MCF 10A (cell line): ENCODE measurements at regions of chr9 and their contacts with region 1.

Region 1: DNA sequence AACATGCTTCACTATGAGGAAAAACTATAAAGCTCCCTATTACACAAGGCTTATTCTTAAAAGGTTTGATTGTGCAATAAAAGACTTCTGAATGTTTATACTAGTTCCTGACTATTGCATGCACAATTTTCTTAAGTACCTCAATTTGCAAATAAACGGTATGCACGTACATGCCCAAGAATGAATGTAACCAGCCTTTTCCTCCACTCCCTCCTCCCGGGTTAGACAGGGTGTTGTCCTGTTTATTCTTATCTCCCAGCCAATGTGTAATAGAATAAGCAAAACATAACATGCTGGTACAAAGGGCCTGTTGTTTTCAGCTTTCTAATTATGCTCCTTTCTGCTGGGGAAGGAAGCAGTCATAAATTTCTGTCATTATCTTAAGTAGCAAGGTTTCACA is 79.1 kb downstream of the AOPEP start:
- DNase-seq: peak; percentile 93
- H3K4me3 Mint-ChIP-seq: peak overlapping the region; percentile 51
- H3K27ac Mint-ChIP-seq: peak overlapping the region; percentile 100
- H3K4me1 Mint-ChIP-seq: peaks cover 50% of the 10 kb centered on the region
- H3K27me3 Mint-ChIP-seq: no peaks in the 10 kb centered on the region
- CTCF ChIP-seq: no peak

Region 2: GRCh38 chr9:94639061-94639998 is 166.3 kb before region 1 on chr9 and contains the start of gene FBP1:
- CTCF ChIA-PET with region 1: no interaction called
- POLR2A ChIA-PET with region 1: no interaction called
- intact Hi-C with region 1: no loop called
- DNase-seq: no peak
- H3K4me3 Mint-ChIP-seq: peak within 1 kb of the TSS; percentile 43
- H3K27ac Mint-ChIP-seq: no peak within 1 kb of the TSS
- H3K4me1 Mint-ChIP-seq: peaks cover 1% of the 10 kb centered on the region
- H3K27me3 Mint-ChIP-seq: peaks cover 12% of the 10 kb centered on the region
- CTCF ChIP-seq: no peak
- total RNA-seq, gene FBP1: not detected in 2 replicates

Region 3: GRCh38 chr9:94717761-94718160 is 87.8 kb before region 1 on chr9:
- CTCF ChIA-PET with region 1: no interaction called
- POLR2A ChIA-PET with region 1: no interaction called
- intact Hi-C with region 1: no loop called
- DNase-seq: no peak
- H3K4me3 Mint-ChIP-seq: no peak overlapping the region
- H3K27ac Mint-ChIP-seq: no peak overlapping the region
- H3K4me1 Mint-ChIP-seq: peaks cover 5% of the 10 kb centered on the region
- H3K27me3 Mint-ChIP-seq: no peaks in the 10 kb centered on the region
- CTCF ChIP-seq: no peak

Region 4: GRCh38 chr9:94772639-94773303 is 32.8 kb before region 1 on chr9:
- CTCF ChIA-PET with region 1: no interaction called
- POLR2A ChIA-PET with region 1: no interaction called
- intact Hi-C with region 1: no loop called
- DNase-seq: no peak
- H3K4me3 Mint-ChIP-seq: no peak overlapping the region
- H3K27ac Mint-ChIP-seq: no peak overlapping the region
- H3K4me1 Mint-ChIP-seq: no peaks in the 10 kb centered on the region
- H3K27me3 Mint-ChIP-seq: no peaks in the 10 kb centered on the region
- CTCF ChIP-seq: no peak

Region 5: DNA sequence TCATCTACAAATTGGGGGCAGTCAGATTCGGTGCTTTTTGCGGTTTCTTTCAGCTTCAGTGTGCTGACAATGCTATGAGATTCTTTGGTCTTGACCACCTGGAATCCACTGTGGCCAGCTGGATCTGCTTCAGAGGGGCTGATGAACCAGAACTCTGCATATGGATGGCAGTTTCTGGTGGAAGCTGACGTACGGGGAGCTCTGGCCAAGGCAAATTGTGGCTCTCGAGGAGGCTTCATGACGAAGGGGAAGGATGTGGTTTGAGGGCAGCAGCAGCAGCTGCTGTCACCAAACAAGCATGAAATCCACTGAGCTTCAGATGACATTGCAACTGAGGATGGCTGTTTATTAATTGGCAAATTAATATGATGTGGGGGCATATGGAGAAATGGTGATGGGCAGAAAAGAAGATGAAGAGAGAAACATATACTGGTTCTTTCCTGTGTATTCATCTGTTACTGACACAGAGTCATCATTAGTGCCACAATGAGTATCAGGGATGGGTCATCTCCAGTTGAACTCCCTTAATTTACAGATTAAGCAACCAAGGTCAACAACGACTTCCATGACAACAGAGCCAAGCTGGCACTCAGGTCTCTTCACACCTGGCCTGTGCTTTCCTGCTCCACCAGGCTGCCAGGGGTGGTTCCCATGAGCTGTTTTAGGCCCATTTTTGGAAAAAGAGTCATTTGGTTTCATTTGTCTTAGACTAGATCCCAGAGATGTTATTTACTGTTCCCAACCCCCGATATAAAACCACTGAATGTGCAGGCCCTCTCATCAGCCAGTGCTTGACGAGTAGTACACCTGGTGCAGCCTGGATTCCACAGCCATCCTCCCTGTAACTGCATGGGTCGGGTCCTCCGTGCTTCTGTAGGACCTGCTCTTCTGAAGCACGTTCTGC is 55.6 kb after region 1 on chr9:
- CTCF ChIA-PET with region 1: no interaction called
- POLR2A ChIA-PET with region 1: interaction called, 50 read pairs
- intact Hi-C with region 1: loop called (anchors 10 kb)
- DNase-seq: no peak
- H3K4me3 Mint-ChIP-seq: no peak overlapping the region
- H3K27ac Mint-ChIP-seq: peak overlapping the region; percentile 76
- H3K4me1 Mint-ChIP-seq: peaks cover 22% of the 10 kb centered on the region
- H3K27me3 Mint-ChIP-seq: no peaks in the 10 kb centered on the region
- CTCF ChIP-seq: no peak

Region 6: GRCh38 chr9:94881023-94881422 is 75.4 kb after region 1 on chr9:
- CTCF ChIA-PET with region 1: no interaction called
- POLR2A ChIA-PET with region 1: interaction called, 12 read pairs
- intact Hi-C with region 1: no loop called
- DNase-seq: no peak
- H3K4me3 Mint-ChIP-seq: no peak overlapping the region
- H3K27ac Mint-ChIP-seq: no peak overlapping the region
- H3K4me1 Mint-ChIP-seq: peaks cover 15% of the 10 kb centered on the region
- H3K27me3 Mint-ChIP-seq: no peaks in the 10 kb centered on the region
- CTCF ChIP-seq: no peak

Region 7: GRCh38 chr9:94912700-94913249 is 107.2 kb after region 1 on chr9:
- CTCF ChIA-PET with region 1: interaction called, 11 read pairs
- POLR2A ChIA-PET with region 1: interaction called, 24 read pairs
- intact Hi-C with region 1: no loop called
- DNase-seq: peak; percentile 82
- H3K4me3 Mint-ChIP-seq: peak overlapping the region; percentile 21
- H3K27ac Mint-ChIP-seq: peak overlapping the region; percentile 57
- H3K4me1 Mint-ChIP-seq: peaks cover 35% of the 10 kb centered on the region
- H3K27me3 Mint-ChIP-seq: no peaks in the 10 kb centered on the region
- CTCF ChIP-seq: no peak

Region 8: GRCh38 chr9:94937214-94937903 is 131.8 kb after region 1 on chr9:
- CTCF ChIA-PET with region 1: no interaction called
- POLR2A ChIA-PET with region 1: interaction called, 12 read pairs
- intact Hi-C with region 1: no loop called
- DNase-seq: peak; percentile 88
- H3K4me3 Mint-ChIP-seq: no peak overlapping the region
- H3K27ac Mint-ChIP-seq: peak overlapping the region; percentile 72
- H3K4me1 Mint-ChIP-seq: peaks cover 23% of the 10 kb centered on the region
- H3K27me3 Mint-ChIP-seq: no peaks in the 10 kb centered on the region
- CTCF ChIP-seq: no peak

Region 9: DNA sequence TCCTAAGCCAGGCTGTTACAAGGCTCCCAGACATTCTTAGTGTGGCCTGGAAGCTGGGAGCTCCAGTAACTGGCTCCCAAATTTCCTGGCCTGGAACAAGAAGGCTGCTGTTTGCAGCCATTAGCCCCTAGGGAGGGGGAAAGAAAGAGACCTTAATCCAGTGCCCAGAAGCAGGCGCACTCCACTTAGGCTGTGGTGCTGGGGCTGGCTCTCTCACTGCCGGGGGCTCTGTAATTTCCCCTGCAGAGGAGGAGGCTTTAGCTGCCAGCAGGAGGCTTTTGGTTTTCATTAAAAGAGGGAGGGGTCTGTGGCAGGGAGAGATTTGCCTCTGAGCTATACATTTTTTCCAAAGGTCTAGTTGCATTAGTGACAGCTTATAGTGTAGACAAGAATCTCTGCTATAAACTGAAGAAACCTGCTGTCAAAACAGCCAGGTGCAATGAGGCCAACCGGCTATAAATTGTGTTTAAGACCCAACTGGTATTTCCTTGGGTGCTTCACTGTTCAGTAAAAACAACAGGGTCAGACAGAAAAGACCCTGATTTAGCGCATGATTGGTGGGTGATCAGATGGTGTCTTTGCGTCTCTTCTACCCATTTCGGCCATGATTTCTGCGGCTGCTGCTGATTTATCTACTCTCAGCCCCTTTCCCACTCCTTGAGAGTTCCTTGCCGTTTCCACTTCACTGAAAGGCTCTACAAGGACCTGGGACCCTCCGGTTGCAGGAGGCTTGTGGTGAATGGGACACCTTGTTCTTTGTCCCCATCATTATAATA is 175.6 kb after region 1 on chr9:
- CTCF ChIA-PET with region 1: no interaction called
- POLR2A ChIA-PET with region 1: no interaction called
- intact Hi-C with region 1: no loop called
- DNase-seq: no peak
- H3K4me3 Mint-ChIP-seq: no peak overlapping the region
- H3K27ac Mint-ChIP-seq: no peak overlapping the region
- H3K4me1 Mint-ChIP-seq: no peaks in the 10 kb centered on the region
- H3K27me3 Mint-ChIP-seq: no peaks in the 10 kb centered on the region
- CTCF ChIP-seq: no peak

Region 10: GRCh38 chr9:95018099-95018936 is 212.7 kb after region 1 on chr9:
- CTCF ChIA-PET with region 1: no interaction called
- POLR2A ChIA-PET with region 1: interaction called, 20 read pairs
- intact Hi-C with region 1: no loop called
- DNase-seq: peak; percentile 97
- H3K4me3 Mint-ChIP-seq: peak overlapping the region; percentile 31
- H3K27ac Mint-ChIP-seq: peak overlapping the region; percentile 94
- H3K4me1 Mint-ChIP-seq: peaks cover 41% of the 10 kb centered on the region
- H3K27me3 Mint-ChIP-seq: no peaks in the 10 kb centered on the region
- CTCF ChIP-seq: no peak